Endothelial cell of umbilical vein (primary cell): ENCODE measurements at regions of chr1 and their contacts with region 1.

Region 1: DNA sequence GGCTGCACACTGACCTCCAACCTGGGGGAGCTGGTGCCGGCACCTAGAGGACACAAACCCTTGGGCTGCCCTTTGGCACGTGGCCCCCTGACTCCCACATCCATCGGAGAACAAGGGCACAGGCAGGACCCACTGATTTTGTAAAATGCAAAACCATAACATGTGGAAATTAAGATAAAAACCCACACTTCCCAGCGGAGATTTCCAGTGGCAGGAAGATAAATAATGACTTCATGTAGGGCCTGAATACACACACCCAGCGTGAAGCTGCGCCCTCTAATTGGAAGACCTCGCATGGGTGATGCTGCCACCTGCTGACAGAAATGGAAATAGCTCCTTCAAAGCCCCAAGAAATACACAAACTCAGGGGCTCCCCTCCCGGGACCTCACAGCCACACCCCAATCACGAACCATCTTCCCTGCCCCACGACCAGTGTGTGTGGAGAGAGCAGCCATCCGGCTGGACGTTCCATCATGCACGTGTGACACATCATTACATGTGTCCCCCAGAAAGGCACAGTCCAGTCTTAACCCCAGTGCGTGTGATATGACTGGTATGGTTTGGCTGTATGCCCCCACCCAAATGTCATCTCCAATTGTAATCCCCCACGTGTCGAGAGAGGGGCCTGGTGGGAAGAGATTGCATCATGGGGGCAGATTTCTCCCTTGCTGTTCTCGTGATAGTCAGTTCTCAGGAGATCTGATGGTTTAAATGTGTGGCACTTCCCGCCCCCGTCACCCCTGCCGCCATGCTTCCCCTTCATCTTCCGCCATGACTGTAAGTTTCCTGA is 5.7 kb upstream of the TPRG1L start:
- DNase-seq: peak; percentile 80
- H3K4me3 ChIP-seq: no peak overlapping the region
- H3K27ac ChIP-seq: peak overlapping the region; percentile 47
- H3K4me1 ChIP-seq: peaks cover 25% of the 10 kb centered on the region
- H3K27me3 ChIP-seq: no peaks in the 10 kb centered on the region
- CTCF ChIP-seq: peak; percentile 78
- POLR2A ChIP-seq: no peak

Region 2: GRCh38 chr1:3453203-3453761 is 165.8 kb before region 1 on chr1:
- CTCF ChIA-PET with region 1: interaction called, 139 read pairs
- POLR2A ChIA-PET with region 1: no interaction called
- dilution Hi-C with region 1: no loop called
- intact Hi-C with region 1: loop called (anchors 1 kb)
- DNase-seq: peak; percentile 56
- H3K4me3 ChIP-seq: no peak overlapping the region
- H3K27ac ChIP-seq: no peak overlapping the region
- H3K4me1 ChIP-seq: no peaks in the 10 kb centered on the region
- H3K27me3 ChIP-seq: peaks cover 0 to 3% of the 10 kb centered on the region in 2 experiments
- CTCF ChIP-seq: peak; percentile 82 to 94
- POLR2A ChIP-seq: no peak

Region 3: DNA sequence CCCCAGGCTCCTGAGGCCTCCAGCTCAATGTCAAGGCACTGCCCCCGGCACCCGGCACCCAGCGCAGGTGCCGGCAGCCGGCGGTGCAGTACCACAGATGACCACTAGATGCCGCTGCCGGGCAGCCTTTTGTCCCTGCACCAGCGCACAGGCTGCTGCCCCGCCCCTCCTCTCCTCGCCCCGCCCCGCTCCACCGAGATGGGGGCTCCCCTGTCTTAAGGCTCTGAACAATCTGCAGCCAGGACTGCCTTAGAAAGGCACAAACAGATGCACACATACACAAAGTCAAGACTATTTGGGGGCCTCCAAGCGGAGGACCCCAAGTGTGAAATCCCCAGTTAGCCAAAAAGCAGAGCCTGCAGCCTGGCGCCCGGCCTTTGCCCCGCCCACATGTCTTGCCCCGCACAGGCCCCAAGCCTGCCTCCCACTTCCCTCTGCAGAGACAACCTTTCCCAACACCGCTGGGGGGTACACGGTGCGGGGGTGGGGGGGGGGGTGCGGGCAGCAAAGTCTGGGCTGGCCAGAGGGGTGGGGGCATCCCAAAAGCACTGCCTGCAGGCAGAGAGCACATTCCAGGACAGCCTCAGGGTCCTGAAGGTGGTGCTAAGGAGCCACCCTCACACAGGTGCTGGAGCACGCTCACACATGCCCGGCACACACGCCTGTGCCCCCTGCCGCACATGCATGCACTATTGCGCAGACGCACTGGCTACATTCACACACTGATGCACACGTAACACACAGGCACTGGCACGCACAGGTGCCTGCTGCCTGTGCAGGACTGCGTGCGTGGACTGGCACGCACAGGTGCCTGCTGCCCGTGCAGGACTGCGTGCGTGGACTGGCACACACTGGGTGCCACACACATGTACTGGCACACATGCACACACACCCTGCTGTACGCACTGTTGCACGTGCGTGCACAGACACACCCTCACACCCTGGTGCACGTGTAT is 127.5 kb before region 1 on chr1:
- CTCF ChIA-PET with region 1: interaction called, 150 read pairs
- POLR2A ChIA-PET with region 1: no interaction called
- dilution Hi-C with region 1: no loop called
- intact Hi-C with region 1: loop called (anchors 1 kb)
- DNase-seq: peak; percentile 62
- H3K4me3 ChIP-seq: no peak overlapping the region
- H3K27ac ChIP-seq: no peak overlapping the region
- H3K4me1 ChIP-seq: no peaks in the 10 kb centered on the region
- H3K27me3 ChIP-seq: no peaks in the 10 kb centered on the region
- CTCF ChIP-seq: peak; percentile 88 to 98
- POLR2A ChIP-seq: no peak

Region 4: DNA sequence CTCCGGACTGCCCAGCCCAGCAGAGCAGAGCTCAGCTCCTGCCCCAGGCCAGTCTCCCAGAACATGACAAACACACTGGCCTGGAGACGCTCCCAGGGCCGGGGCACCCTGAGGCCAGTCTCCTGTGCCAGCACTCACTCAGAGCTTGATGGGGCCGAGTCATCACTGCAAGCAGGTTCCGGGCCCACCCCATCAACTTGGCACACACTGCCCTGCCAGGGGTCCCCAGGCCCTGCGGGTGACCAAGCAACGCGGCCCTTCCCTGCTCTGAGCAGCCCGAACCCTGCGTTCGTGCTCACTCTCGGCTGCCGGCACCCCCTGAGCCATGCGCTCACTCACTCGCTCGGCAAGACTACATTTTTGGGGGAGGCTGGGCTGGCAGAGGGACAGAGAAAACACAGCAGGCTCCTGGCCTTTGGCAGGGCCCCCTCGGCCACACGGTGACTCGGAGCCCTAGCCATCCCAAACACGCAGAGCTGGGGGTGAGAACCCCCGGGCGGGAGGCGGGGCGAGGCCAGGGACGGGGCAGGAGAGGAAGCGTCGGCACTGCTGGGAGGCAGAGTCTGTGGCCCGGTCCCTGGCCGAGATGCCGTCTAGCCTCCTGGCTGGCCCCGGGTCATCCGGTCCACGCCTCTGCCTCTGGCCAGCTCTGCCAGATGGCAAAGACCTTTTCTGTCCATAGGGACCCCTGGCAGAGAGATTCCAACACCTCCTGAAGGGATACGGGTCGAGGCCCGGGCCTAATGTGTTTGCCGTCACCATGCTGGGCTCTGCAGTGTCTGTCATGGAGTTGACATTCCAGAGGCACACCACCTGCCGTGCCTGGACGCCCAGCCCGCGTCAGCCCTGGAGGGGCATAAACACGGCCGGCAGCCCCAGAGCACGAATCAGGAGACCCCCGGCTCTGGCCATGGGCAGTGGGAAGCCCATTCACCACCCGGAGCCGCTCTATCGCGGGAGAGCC is 75.7 kb before region 1 on chr1:
- CTCF ChIA-PET with region 1: interaction called, 7 read pairs
- POLR2A ChIA-PET with region 1: no interaction called
- dilution Hi-C with region 1: no loop called
- intact Hi-C with region 1: loop called (anchors 2 kb)
- DNase-seq: peak; percentile 29
- H3K4me3 ChIP-seq: no peak overlapping the region
- H3K27ac ChIP-seq: no peak overlapping the region
- H3K4me1 ChIP-seq: peaks cover 17% of the 10 kb centered on the region
- H3K27me3 ChIP-seq: no peaks in the 10 kb centered on the region
- CTCF ChIP-seq: no peak
- POLR2A ChIP-seq: no peak

Region 5: DNA sequence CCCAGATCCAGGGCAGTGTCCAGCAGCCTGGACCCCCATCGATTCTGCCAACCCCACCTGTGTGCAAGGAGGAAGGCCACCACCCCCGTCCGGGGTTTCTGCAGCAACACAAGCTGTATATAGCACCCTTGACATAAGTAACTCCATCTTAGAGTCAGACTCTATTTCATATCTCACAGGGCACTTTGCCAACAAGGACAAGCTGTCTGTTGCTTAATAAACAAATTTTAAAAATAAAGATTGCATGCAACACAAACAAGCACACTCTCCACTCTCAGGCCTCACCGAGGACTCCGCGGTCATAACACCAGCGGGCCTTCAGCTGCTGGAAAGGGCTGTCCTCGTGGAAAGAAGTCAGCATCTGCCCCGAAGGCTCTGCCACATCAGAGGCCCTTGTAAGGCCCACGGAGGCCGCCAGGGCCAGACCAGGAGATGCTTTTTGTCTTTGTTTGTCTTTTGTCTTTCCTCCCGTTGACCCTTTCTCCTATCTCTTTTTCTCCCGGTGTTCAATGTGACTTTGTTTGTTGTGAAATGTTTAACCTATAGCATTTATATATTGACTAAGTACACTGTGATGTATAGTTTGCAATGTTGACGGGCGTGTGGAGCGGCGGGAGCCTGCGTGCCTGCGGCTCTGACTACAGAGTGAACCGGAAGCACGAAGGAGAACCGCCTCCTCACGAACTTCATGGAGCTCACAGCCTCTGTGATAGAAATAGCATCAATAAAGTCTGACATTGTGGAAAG is 32.0 kb before region 1 on chr1:
- CTCF ChIA-PET with region 1: interaction called, 139 read pairs
- POLR2A ChIA-PET with region 1: no interaction called
- dilution Hi-C with region 1: no loop called
- intact Hi-C with region 1: loop called (anchors 1 kb)
- DNase-seq: no peak
- H3K4me3 ChIP-seq: no peak overlapping the region
- H3K27ac ChIP-seq: no peak overlapping the region
- H3K4me1 ChIP-seq: peaks cover 14% of the 10 kb centered on the region
- H3K27me3 ChIP-seq: no peaks in the 10 kb centered on the region
- CTCF ChIP-seq: no peak
- POLR2A ChIP-seq: no peak

Region 6: DNA sequence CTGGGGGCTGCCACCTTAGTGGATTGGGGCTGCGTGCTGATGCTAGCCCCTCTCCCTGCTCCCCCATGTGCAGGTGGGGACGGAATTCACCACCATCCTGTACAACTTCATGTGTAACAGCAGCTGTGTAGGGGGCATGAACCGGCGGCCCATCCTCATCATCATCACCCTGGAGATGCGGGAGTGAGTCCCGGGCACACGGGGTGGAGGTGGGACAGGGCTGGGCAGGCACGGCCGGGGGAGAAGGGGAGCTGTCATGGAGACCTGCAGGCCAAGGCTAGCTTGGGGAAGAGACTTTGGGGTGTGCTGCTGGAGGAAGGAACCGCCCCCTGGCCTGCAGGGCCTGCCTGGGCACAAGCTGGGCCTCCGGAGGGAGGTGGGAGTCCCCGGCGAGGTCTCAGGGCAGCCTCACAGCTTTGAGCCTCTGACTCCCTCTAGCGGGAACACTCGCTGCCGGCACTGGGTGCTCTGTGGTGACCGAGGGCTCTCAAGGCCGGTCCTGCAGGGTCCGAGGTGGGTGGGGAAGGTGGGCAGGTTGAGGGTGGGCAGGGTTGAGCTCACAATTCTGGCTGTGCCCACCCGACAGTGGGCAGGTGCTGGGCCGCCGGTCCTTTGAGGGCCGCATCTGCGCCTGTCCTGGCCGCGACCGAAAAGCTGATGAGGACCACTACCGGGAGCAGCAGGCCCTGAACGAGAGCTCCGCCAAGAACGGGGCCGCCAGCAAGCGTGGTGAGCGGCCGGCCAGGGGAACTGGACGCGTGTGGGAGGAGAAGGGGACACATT is 108.2 kb after region 1 on chr1:
- CTCF ChIA-PET with region 1: interaction called, 10 read pairs
- POLR2A ChIA-PET with region 1: no interaction called
- dilution Hi-C with region 1: no loop called
- intact Hi-C with region 1: loop called (anchors 1 kb)
- DNase-seq: no peak
- H3K4me3 ChIP-seq: no peak overlapping the region
- H3K27ac ChIP-seq: no peak overlapping the region
- H3K4me1 ChIP-seq: no peaks in the 10 kb centered on the region
- H3K27me3 ChIP-seq: no peaks in the 10 kb centered on the region
- CTCF ChIP-seq: peak; percentile 31 to 54
- POLR2A ChIP-seq: no peak